ENCODE measurements at regions of chr7 and their contacts with region 1.

Region 1: DNA sequence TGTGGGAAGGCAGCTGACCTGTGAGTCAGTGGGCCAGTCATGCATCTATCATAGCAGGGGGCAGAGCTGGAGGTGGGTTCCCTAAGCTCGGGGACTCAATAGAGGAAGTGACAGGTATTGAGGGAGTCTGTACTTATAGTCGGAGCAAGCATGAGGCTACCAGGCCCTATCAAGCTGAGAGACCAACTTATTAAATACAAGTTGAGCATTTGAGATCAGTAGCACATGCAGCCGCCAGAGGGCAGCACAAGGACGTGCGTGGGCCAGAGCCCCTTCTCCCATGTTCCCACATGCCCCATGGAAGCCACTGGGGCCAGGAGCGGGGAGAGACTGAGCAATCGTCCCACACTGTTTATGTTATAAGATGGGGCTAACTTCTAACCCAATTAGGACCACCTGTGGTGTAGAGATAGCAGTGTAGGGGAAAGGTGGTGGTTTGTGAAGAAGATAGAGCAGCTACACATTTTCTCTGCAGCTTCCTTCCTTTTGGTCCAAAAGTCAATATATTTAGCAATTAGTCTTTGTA is 13.0 kb upstream of the STK31 start:
- DNase-seq: peak; percentile 70
- CTCF ChIP-seq: peak; percentile 72

Region 2: DNA sequence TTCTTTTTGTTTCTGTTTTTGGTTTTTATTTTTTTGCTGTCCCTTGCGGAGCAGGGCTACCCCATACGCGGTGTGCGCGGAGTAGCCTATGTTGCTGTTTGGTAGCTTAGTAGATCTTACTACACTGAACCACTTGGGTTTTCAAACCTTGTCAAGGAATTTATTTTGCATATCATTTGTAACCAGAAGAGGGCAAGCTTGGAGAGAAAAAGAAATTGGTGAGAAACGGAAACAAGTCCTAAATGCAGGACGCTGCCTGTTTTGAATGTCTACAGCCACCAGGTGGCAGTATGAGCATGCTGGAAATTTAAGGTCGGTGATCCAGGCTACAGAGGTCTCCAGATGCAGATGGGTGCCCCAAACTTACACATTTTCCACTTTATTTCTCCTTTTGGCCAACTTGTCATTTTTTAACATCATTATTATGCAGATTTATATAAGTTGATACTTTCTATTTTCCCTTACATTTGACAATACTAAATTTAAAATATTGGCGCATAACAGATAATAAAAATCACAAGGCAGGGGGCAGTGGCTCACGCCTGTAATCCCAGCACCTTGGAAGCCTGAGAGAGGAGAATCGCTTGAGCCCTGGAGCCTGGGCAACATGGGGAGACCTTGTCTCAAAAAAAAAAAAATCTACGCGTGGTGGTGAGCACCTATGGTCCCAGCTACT is 149.9 kb before region 1 on chr7:
- CTCF ChIA-PET with region 1: interaction called, 13 read pairs
- POLR2A ChIA-PET with region 1: no interaction called
- DNase-seq: peak; percentile 82
- CTCF ChIP-seq: peak; percentile 91

Region 3: DNA sequence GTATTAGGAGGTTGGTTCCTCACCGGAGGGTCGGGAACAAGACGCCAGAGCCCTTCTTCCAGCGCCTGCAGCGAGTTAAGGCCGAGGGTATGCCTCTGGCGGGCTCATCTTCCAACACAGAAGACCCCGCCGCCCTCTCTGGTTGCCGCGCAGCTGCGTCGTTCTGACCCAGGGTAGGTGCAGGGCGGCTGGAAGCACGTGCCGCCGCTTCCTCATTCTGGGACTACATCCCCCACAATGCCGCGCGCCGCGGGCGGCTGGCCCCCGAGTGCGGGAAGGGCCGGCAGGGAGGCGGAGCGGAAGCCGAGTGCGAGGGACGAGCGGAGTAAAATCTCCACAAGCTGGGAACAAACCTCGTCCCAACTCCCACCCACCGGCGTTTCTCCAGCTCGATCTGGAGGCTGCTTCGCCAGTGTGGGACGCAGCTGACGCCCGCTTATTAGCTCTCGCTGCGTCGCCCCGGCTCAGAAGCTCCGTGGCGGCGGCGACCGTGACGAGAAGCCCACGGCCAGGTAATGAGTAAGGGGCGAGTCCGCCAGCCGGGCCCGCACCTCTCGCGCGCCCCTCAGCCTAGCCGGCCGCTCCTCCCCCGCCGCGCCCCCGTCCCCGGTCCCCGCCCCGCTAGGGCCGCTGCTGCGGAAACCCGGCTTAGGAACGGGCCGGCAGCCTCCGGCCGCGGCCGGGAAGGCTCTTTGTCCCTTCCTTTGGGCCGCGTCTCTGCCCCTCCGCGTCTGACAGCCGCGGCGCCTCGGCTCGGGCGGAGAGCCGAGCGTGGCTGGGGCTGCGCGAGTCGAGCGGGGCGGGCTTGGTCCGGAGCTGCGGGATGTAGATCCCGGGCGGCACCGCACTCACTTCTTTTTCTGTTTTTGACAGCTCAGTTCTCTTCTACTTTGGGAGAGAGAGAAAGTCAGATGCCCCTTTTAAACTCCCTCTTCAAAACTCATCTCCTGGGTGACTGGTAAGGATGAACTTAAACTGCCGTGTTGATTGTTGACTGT is 99.6 kb before region 1 on chr7 and contains the start of gene CCDC126:
- CTCF ChIA-PET with region 1: interaction called, 15 read pairs
- POLR2A ChIA-PET with region 1: no interaction called
- DNase-seq: peak; percentile 89
- CTCF ChIP-seq: no peak

Region 4: GRCh38 chr7:23662124-23662983 is 34.6 kb before region 1 on chr7:
- CTCF ChIA-PET with region 1: no interaction called
- POLR2A ChIA-PET with region 1: no interaction called
- DNase-seq: no peak
- CTCF ChIP-seq: no peak

Region 5: GRCh38 chr7:23679898-23680413 is 17.0 kb before region 1 on chr7 and contains the start of gene FAM221A:
- CTCF ChIA-PET with region 1: interaction called, 112 read pairs
- POLR2A ChIA-PET with region 1: no interaction called
- DNase-seq: peak; percentile 87
- CTCF ChIP-seq: peak; percentile 69

Region 6: DNA sequence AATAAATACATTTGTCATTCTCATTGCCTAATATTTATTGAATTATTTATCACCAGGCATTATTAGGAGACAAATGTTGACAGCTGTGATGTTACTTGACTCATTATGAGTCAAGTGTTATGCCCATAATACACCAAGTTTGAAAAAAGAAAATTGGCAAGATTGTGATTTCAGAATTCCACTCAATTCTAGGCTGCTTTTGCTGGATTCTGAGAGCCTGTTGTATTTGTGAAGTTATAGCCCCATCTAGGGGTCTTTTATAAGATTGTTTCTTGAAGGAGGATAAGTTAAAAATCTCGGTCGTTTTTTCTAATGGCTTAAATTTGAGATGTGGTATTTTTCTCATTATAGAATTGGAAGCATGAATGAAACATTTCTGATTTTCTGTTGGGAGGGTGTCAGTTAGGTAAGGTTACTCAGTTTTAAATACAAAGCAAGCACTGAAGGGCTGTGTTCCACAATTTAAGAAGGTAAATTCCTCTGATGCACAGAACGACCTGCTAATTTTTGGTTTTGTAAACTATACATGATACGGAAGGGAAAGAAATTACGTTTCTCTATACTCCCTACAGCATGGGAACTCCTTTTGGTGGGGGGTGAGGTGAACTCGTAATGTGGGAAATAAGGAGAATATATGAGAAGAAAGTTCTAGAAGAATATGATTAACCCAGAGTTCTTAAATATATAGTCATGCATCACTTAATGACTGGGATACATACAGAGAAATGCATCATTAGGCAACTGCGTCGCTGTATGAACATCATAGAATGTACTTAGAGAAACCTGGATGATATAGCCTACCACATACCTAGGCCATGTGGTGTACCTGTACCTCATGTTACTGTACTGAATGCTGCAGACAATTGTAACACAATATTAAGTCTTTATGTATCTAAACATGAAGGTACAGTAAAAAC is 15.6 kb after region 1 on chr7:
- CTCF ChIA-PET with region 1: interaction called, 35 read pairs
- POLR2A ChIA-PET with region 1: no interaction called
- DNase-seq: peak; percentile 56
- CTCF ChIP-seq: peak; percentile 29